ENCODE measurements at regions of chr2 and their contacts with region 1.

Region 1: GRCh38 chr2:11129598-11130449 is 25.4 kb upstream of the SLC66A3 start:
- DNase-seq: peak in 4 of 7 donors; percentile 44 to 50 (median 48)
- H3K4me3 ChIP-seq: peak overlapping the region in 2 of 4 donors; percentile 6 to 54
- H3K27ac ChIP-seq: peak overlapping the region in 2 of 5 donors; percentile 7 to 21
- H3K4me1 ChIP-seq: peaks cover 16 to 19% of the 10 kb centered on the region in 2 donors
- H3K27me3 ChIP-seq: no peaks in the 10 kb centered on the region
- CTCF ChIP-seq: peak in 3 of 6 experiments; percentile 11 to 35 (median 17)
- POLR2A ChIP-seq: no peak

Region 2: GRCh38 chr2:11187083-11187619 is 57.3 kb after region 1 on chr2:
- intact Hi-C with region 1: no loop called
- DNase-seq: peak in 3 of 7 donors; percentile 23 to 42 (median 27)
- H3K4me3 ChIP-seq: no peak overlapping the region
- H3K27ac ChIP-seq: no peak overlapping the region
- H3K4me1 ChIP-seq: peaks cover 0 to 3% of the 10 kb centered on the region in 2 donors
- H3K27me3 ChIP-seq: no peaks in the 10 kb centered on the region
- CTCF ChIP-seq: no peak
- POLR2A ChIP-seq: no peak

Region 3: GRCh38 chr2:11239666-11240462 is 110.0 kb after region 1 on chr2:
- intact Hi-C with region 1: loop called in 1 of 2 experiments (anchors 5 kb)
- DNase-seq: peak in 5 of 7 donors; percentile 13 to 36 (median 21)
- H3K4me3 ChIP-seq: no peak overlapping the region
- H3K27ac ChIP-seq: no peak overlapping the region
- H3K4me1 ChIP-seq: peaks cover 0 to 9% of the 10 kb centered on the region in 2 donors
- H3K27me3 ChIP-seq: no peaks in the 10 kb centered on the region
- CTCF ChIP-seq: no peak
- POLR2A ChIP-seq: no peak

Region 4: GRCh38 chr2:11357428-11357972 is 227.7 kb after region 1 on chr2:
- intact Hi-C with region 1: loop called in 1 of 2 experiments (anchors 10 kb)
- DNase-seq: peak in 6 of 7 donors; percentile 66 to 87 (median 75)
- H3K4me3 ChIP-seq: no peak overlapping the region
- H3K27ac ChIP-seq: peak overlapping the region in 4 of 5 donors; percentile 26 to 76 (median 54)
- H3K4me1 ChIP-seq: peaks cover 20 to 25% of the 10 kb centered on the region in 2 donors
- H3K27me3 ChIP-seq: no peaks in the 10 kb centered on the region
- CTCF ChIP-seq: no peak
- POLR2A ChIP-seq: peak in 1 of 2 donors; percentile 33

Measured in adrenal gland (tissue), 19 donors.